ENCODE measurements at regions of chr3 and their contacts with region 1.

Region 1: GRCh38 chr3:59559721-59560435 is 510.1 kb upstream of the CFAP20DC start:
- DNase-seq: peak; percentile 71
- H3K4me3 Mint-ChIP-seq: no peak overlapping the region
- H3K27ac Mint-ChIP-seq: peak overlapping the region; percentile 84
- H3K4me1 Mint-ChIP-seq: peaks cover 24% of the 10 kb centered on the region
- H3K27me3 Mint-ChIP-seq: no peaks in the 10 kb centered on the region

Region 2: GRCh38 chr3:59313365-59313764 is 246.5 kb before region 1 on chr3:
- CTCF ChIA-PET with region 1: interaction called, 3 read pairs
- intact Hi-C with region 1: loop called (anchors 5 kb)
- DNase-seq: peak; percentile 74
- H3K4me3 Mint-ChIP-seq: no peak overlapping the region
- H3K27ac Mint-ChIP-seq: no peak overlapping the region
- H3K4me1 Mint-ChIP-seq: peaks cover 22% of the 10 kb centered on the region
- H3K27me3 Mint-ChIP-seq: no peaks in the 10 kb centered on the region

Region 3: DNA sequence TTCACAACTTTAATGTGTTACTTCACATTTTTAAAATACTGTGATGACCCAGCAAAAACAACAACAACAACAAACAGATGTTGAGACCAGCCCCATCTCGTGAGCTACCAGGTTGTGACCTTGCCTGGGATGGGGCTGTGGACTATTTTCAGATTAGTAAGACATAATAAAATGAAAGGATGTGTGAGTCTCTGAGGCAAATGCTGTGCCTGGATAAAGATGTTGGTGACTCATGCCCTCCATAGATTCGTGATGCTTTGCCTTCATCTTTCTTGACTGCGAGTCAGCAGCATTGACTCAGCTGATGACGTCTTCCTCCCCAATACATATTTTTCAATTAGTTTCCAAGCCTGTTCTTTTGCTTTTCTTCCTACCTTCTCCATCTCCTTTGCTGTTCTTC is 57.1 kb before region 1 on chr3:
- CTCF ChIA-PET with region 1: no interaction called
- intact Hi-C with region 1: loop called (anchors 2 kb)
- DNase-seq: peak; percentile 73
- H3K4me3 Mint-ChIP-seq: no peak overlapping the region
- H3K27ac Mint-ChIP-seq: no peak overlapping the region
- H3K4me1 Mint-ChIP-seq: peaks cover 18% of the 10 kb centered on the region
- H3K27me3 Mint-ChIP-seq: no peaks in the 10 kb centered on the region

Region 4: DNA sequence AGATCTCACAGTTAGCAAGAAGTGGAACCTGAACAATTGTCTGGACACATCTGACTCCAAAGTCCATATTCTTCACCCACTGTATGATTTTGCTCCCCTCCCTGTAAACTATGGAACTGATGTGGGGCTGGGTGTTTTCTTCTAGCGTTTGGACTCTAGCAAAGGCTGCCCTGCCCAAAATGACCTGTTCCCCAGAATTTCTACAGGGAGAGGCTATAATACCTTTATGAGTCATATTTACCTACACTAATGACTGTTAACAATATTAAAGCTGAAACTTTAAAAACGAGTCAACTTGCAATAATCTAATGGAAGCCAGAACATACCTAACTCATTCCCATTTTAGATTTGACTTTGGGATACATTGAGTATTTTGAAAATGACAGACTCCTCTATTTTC is 21.1 kb after region 1 on chr3:
- CTCF ChIA-PET with region 1: no interaction called
- intact Hi-C with region 1: loop called (anchors 1 kb)
- DNase-seq: no peak
- H3K4me3 Mint-ChIP-seq: no peak overlapping the region
- H3K27ac Mint-ChIP-seq: no peak overlapping the region
- H3K4me1 Mint-ChIP-seq: peaks cover 15% of the 10 kb centered on the region
- H3K27me3 Mint-ChIP-seq: no peaks in the 10 kb centered on the region

Region 5: DNA sequence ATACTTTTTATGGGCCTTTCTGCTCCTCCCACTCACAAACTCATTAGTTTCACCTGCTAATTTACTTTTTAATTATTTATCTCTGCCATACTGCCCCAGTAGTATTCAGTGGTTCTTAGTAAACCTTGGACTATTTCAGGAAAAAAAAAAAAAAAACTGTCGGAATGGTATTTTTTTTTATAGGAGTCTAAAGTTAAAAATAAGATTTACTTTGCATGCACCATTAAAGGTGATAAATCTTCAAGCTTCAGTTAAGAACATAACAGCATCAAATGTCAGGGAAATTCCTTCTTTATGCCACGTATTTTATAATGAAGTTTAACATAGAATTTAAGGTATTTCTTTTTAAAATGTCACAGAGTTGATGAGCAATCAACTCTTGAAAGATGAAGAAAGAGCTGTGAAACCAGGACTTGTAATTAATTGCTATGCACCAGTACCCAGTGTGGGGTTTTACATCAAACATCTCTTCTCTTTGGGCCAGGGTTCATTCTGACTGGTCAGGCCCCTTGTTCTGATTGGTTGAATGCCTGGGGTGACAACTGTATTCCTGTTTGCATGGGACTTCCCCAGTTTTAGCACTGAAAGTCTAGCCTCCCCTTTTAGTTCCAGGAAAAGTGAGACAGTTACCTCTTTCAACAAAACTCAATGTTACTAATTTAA is 1961.2 kb after region 1 on chr3:
- CTCF ChIA-PET with region 1: no interaction called
- intact Hi-C with region 1: loop called (anchors 10 kb)
- DNase-seq: peak; percentile 87
- H3K4me3 Mint-ChIP-seq: no peak overlapping the region
- H3K27ac Mint-ChIP-seq: peak overlapping the region; percentile 70
- H3K4me1 Mint-ChIP-seq: peaks cover 31% of the 10 kb centered on the region
- H3K27me3 Mint-ChIP-seq: peaks cover 3% of the 10 kb centered on the region

Measured in activated naive CD4-positive, alpha-beta T cell treated with anti-CD3 and anti-CD28 coated beads for 36 hours (primary cell).